A673 (cell line): ENCODE measurements at regions of chr1 and their contacts with region 1.

Region 1: DNA sequence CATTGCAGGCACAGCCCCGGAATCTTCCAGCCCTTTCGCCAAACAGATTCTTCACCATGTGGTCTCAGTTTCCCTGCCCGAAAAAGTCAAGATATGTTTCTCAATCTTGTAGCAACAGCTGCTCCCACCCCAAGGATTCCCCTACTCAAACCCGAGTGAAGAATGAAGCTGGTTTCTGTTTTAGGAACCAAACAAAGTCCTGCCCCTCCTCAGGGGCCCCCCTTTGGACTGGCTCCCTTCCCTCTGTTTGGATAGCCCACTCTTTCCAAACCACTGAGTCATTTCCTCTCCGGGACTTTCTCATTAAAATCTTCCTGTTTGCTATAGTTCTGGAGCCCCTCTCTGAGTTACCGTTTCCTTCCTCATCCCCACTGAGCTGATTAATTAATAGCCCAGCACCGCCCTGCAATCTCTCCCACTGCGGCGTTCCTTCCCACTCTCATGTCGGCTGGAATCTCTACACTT is 100.9 kb downstream of the TSEN15 start:
- DNase-seq: peak; percentile 99
- H3K4me3 ChIP-seq: peak overlapping the region; percentile 41
- H3K27ac ChIP-seq: peak overlapping the region; percentile 96
- H3K4me1 ChIP-seq: peaks cover 79% of the 10 kb centered on the region
- H3K27me3 ChIP-seq: no peaks in the 10 kb centered on the region
- CTCF ChIP-seq: no peak

Region 2: DNA sequence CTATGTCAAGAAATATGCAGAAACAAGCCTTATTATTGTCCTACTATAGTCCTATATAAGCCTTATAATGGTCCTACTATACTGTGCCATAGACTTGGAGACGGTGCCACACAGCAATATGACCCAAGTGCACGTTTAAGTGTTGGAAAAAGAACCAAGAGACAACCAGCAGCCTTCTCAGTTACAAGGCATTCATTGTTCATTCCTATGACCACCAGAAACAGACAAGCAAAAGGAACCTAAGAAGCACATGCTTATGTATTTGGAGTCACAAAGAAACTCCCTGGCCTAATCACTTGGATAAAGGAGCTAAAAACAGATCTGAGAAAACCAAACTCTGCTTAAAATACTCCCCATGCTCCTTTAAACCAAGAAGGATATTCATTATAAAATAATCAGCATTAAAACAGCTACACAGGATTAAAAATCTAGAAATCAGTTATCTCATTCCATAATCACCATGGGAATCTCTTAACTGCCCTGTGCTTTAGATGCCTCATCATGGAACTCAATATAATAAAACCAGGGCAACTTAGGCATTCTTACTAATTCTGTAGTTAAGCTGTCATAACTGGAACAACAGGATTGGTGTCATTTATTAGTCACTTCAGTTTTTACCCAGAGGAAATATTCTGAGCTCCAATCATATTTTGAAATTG is 121.9 kb before region 1 on chr1:
- CTCF ChIA-PET with region 1: no interaction called
- POLR2A ChIA-PET with region 1: interaction called, 19 read pairs
- intact Hi-C with region 1: no loop called
- DNase-seq: peak; percentile 51
- H3K4me3 ChIP-seq: no peak overlapping the region
- H3K27ac ChIP-seq: peak overlapping the region; percentile 81
- H3K4me1 ChIP-seq: peaks cover 82% of the 10 kb centered on the region
- H3K27me3 ChIP-seq: no peaks in the 10 kb centered on the region
- CTCF ChIP-seq: no peak

Region 3: DNA sequence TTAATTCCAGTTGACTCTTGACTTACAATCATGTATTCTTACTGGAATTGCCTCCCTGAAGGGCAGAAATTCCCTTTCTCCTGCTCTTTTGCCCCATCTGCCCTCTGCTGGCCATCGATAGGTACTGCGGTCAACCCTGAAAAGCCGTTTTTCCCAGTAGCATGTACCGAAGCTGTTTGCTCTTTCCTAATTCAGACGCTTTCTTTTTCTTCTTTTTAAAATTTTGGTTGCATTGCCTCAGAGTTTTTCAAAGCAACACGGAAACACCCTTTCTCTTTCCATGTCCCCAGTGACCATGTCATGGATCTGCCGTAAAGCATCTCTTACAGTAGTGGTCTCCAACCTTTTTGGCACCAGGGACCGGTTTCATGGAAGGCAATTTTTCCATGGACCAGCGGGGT is 70.2 kb after region 1 on chr1:
- CTCF ChIA-PET with region 1: no interaction called
- POLR2A ChIA-PET with region 1: no interaction called
- intact Hi-C with region 1: loop called (anchors 2 kb)
- DNase-seq: peak; percentile 74
- H3K4me3 ChIP-seq: no peak overlapping the region
- H3K27ac ChIP-seq: no peak overlapping the region
- H3K4me1 ChIP-seq: peaks cover 22% of the 10 kb centered on the region
- H3K27me3 ChIP-seq: no peaks in the 10 kb centered on the region
- CTCF ChIP-seq: peak; percentile 95

Region 4: GRCh38 chr1:184386312-184387068 is 234.0 kb after region 1 on chr1 and contains the start of gene C1orf21:
- CTCF ChIA-PET with region 1: no interaction called
- POLR2A ChIA-PET with region 1: no interaction called
- intact Hi-C with region 1: loop called (anchors 10 kb)
- DNase-seq: peak; percentile 96
- H3K4me3 ChIP-seq: peak within 1 kb of the TSS; percentile 95
- H3K27ac ChIP-seq: peak within 1 kb of the TSS; percentile 79
- H3K4me1 ChIP-seq: peaks cover 25% of the 10 kb centered on the region
- H3K27me3 ChIP-seq: no peaks in the 10 kb centered on the region
- CTCF ChIP-seq: no peak
- total RNA-seq, gene C1orf21: 31.3 and 34.3 TPM in 2 replicates

Region 5: GRCh38 chr1:185526344-185527307 is 1374.2 kb after region 1 on chr1:
- CTCF ChIA-PET with region 1: no interaction called
- POLR2A ChIA-PET with region 1: no interaction called
- intact Hi-C with region 1: no loop called
- DNase-seq: no peak
- H3K4me3 ChIP-seq: no peak overlapping the region
- H3K27ac ChIP-seq: no peak overlapping the region
- H3K4me1 ChIP-seq: no peaks in the 10 kb centered on the region
- H3K27me3 ChIP-seq: no peaks in the 10 kb centered on the region
- CTCF ChIP-seq: no peak